Mammary epithelial cell (primary cell): ENCODE measurements at regions of chr12 and their contacts with region 1.

Region 1: DNA sequence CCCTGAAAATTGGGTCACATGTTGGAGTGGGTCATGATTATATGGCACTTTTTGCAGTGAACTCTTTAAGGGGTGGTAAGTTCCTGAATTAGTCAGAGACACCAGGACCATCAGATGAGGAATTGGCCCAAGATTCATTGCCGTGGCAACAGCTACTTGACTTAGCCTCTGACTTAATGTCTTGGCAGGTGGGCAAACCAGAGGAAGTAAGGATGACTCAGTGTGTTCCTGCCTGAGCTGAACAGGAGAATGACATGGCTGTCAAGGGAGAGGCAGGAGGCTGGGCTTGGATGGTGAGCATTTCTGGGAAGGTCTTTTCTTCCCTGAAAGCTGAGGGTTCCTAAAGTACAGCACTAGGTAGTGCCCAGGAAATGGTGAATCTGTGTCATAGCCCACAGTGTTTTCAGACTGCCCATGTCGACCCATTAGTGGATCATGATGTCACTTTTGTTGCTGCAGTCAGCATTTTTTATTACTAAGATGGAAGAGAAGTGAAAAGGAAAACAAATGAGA is 170.1 kb upstream of the PWP1 start:
- DNase-seq: peak; percentile 99
- H3K4me3 ChIP-seq: no peak overlapping the region
- H3K27ac ChIP-seq: peak overlapping the region; percentile 97
- H3K4me1 ChIP-seq: peaks cover 28% of the 10 kb centered on the region
- H3K27me3 ChIP-seq: no peaks in the 10 kb centered on the region
- CTCF ChIP-seq: no peak

Region 2: DNA sequence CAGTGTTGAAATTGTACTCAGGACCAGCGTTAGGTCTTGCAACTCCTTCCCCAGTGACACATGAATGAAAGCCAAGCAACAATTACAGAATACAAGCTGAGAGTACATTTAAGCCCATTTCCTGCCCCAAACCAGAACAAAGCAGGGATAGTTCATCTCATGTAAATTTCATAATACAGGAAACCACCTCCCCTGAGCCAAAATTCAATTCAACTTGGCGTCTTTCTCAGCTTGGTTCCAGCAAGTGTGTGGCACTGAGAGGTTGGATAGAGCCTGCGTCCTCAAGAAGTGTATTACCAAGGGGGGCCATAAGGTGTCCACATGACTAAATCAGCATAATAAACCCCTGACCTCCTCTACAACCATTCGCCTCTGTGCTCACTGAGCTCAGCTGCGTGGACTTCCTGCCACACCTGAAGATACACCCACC is 143.3 kb before region 1 on chr12:
- CTCF ChIA-PET with region 1: no interaction called
- dilution Hi-C with region 1: no loop called
- in situ Hi-C with region 1: no loop called
- intact Hi-C with region 1: no loop called
- DNase-seq: peak; percentile 89
- H3K4me3 ChIP-seq: no peak overlapping the region
- H3K27ac ChIP-seq: peak overlapping the region; percentile 47
- H3K4me1 ChIP-seq: peaks cover 18% of the 10 kb centered on the region
- H3K27me3 ChIP-seq: no peaks in the 10 kb centered on the region
- CTCF ChIP-seq: peak in 1 of 2 donors; percentile 11

Region 3: GRCh38 chr12:107436376-107436775 is 79.1 kb before region 1 on chr12:
- CTCF ChIA-PET with region 1: no interaction called
- dilution Hi-C with region 1: no loop called
- in situ Hi-C with region 1: no loop called
- intact Hi-C with region 1: loop called (anchors 1 kb)
- DNase-seq: peak; percentile 89
- H3K4me3 ChIP-seq: no peak overlapping the region
- H3K27ac ChIP-seq: peak overlapping the region; percentile 37
- H3K4me1 ChIP-seq: peaks cover 34% of the 10 kb centered on the region
- H3K27me3 ChIP-seq: no peaks in the 10 kb centered on the region
- CTCF ChIP-seq: no peak

Region 4: DNA sequence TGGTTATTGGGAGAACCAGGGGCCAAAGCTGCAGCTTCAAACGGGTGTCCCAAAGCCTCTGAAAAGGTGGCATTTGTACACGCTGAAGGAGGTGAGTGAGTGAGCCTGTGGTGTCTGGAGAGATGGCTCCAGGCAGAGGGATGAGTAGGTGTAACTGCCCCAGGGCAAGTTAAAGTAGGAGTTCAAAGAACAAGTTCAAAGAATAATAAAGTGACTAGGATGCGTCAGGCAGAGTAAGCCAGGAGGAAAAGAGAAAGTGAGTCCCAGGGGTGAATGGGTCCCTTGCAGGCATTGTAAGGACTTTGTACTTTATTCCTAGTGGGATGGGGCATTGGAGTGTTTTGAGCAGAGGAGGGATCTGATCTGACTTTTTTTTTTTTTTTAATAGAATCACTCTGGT is 31.3 kb before region 1 on chr12:
- CTCF ChIA-PET with region 1: no interaction called
- dilution Hi-C with region 1: no loop called
- in situ Hi-C with region 1: no loop called
- intact Hi-C with region 1: loop called (anchors 5 kb)
- DNase-seq: peak; percentile 31
- H3K4me3 ChIP-seq: no peak overlapping the region
- H3K27ac ChIP-seq: no peak overlapping the region
- H3K4me1 ChIP-seq: peaks cover 9% of the 10 kb centered on the region
- H3K27me3 ChIP-seq: no peaks in the 10 kb centered on the region
- CTCF ChIP-seq: no peak

Region 5: DNA sequence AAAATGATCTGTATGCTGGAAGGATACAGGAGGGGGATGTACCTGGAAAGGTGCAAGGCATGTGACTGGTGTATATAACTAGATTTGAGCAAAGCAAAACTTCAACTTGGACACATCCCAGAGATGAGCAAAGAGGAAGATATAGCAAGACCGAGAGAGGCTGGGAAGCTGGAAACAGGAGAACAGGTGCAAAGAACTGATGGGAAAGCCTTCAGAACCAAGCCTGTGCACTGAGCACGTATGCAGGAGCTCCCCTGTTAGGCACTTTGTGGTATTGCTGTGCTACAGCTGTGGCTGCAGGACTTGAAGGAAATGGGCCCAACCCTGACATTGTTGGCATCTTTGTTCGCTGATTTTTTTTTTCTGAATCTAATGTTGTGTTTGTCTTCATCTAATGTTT is 49.4 kb after region 1 on chr12:
- CTCF ChIA-PET with region 1: interaction called, 5 read pairs
- dilution Hi-C with region 1: no loop called
- in situ Hi-C with region 1: no loop called
- intact Hi-C with region 1: loop called (anchors 5 kb)
- DNase-seq: peak; percentile 23
- H3K4me3 ChIP-seq: no peak overlapping the region
- H3K27ac ChIP-seq: no peak overlapping the region
- H3K4me1 ChIP-seq: peaks cover 20% of the 10 kb centered on the region
- H3K27me3 ChIP-seq: no peaks in the 10 kb centered on the region
- CTCF ChIP-seq: peak; percentile 71 to 87

Region 6: GRCh38 chr12:107660235-107660634 is 144.7 kb after region 1 on chr12:
- CTCF ChIA-PET with region 1: no interaction called
- dilution Hi-C with region 1: no loop called
- in situ Hi-C with region 1: no loop called
- intact Hi-C with region 1: no loop called
- DNase-seq: no peak
- H3K4me3 ChIP-seq: no peak overlapping the region
- H3K27ac ChIP-seq: no peak overlapping the region
- H3K4me1 ChIP-seq: no peaks in the 10 kb centered on the region
- H3K27me3 ChIP-seq: no peaks in the 10 kb centered on the region
- CTCF ChIP-seq: no peak